ENCODE measurements at regions of chr7 and their contacts with region 1.

Region 1: GRCh38 chr7:99472561-99473243 is at the start of gene ZNF789:
- DNase-seq: peak; percentile 94 to 99 (median 95)
- H3K4me3 ChIP-seq: peak within 1 kb of the TSS; percentile 90 to 93
- H3K4me3 Mint-ChIP-seq: peak within 1 kb of the TSS; percentile 92 to 99 (median 96)
- H3K27ac ChIP-seq: peak within 1 kb of the TSS; percentile 80
- H3K27ac Mint-ChIP-seq: peak within 1 kb of the TSS; percentile 90 to 98 (median 95)
- H3K4me1 ChIP-seq: peaks cover 14% of the 10 kb centered on the region
- H3K4me1 Mint-ChIP-seq: peaks cover 17 to 49% (median 31%) of the 10 kb centered on the region in 4 donors
- H3K27me3 ChIP-seq: no peaks in the 10 kb centered on the region
- H3K27me3 Mint-ChIP-seq: no peaks in the 10 kb centered on the region
- total RNA-seq, gene ZNF789: 20.8 to 21.2 TPM

Region 2: GRCh38 chr7:98641646-98642500 is 830.8 kb before region 1 on chr7:
- CTCF ChIA-PET with region 1: no interaction called
- POLR2A ChIA-PET with region 1: no interaction called
- intact Hi-C with region 1: no loop called
- DNase-seq: no peak
- H3K4me3 ChIP-seq: no peak overlapping the region
- H3K4me3 Mint-ChIP-seq: no peak overlapping the region
- H3K27ac ChIP-seq: no peak overlapping the region
- H3K27ac Mint-ChIP-seq: no peak overlapping the region
- H3K4me1 ChIP-seq: no peaks in the 10 kb centered on the region
- H3K4me1 Mint-ChIP-seq: no peaks in the 10 kb centered on the region
- H3K27me3 ChIP-seq: no peaks in the 10 kb centered on the region
- H3K27me3 Mint-ChIP-seq: peaks cover 0 to 5% of the 10 kb centered on the region in 2 donors

Region 3: GRCh38 chr7:99438573-99439480 is 33.9 kb before region 1 on chr7 and contains the starts of genes CPSF4 and PTCD1:
- CTCF ChIA-PET with region 1: no interaction called
- POLR2A ChIA-PET with region 1: interaction called, 3 read pairs
- intact Hi-C with region 1: loop called (anchors 2 kb)
- DNase-seq: peak; percentile 84 to 87 (median 84)
- H3K4me3 ChIP-seq: peak within 1 kb of the TSS; percentile 77 to 93
- H3K4me3 Mint-ChIP-seq: peak within 1 kb of the TSS; percentile 95 to 98 (median 97)
- H3K27ac ChIP-seq: peak within 1 kb of the TSS; percentile 61
- H3K27ac Mint-ChIP-seq: peak within 1 kb of the TSS; percentile 91 to 96 (median 95)
- H3K4me1 ChIP-seq: peaks cover 17% of the 10 kb centered on the region
- H3K4me1 Mint-ChIP-seq: peaks cover 15 to 40% (median 30%) of the 10 kb centered on the region in 4 donors
- H3K27me3 ChIP-seq: no peaks in the 10 kb centered on the region
- H3K27me3 Mint-ChIP-seq: no peaks in the 10 kb centered on the region
- total RNA-seq, gene CPSF4: 49.2 to 54.7 TPM
- total RNA-seq, gene PTCD1: 7.4 to 7.7 TPM

Region 4: DNA sequence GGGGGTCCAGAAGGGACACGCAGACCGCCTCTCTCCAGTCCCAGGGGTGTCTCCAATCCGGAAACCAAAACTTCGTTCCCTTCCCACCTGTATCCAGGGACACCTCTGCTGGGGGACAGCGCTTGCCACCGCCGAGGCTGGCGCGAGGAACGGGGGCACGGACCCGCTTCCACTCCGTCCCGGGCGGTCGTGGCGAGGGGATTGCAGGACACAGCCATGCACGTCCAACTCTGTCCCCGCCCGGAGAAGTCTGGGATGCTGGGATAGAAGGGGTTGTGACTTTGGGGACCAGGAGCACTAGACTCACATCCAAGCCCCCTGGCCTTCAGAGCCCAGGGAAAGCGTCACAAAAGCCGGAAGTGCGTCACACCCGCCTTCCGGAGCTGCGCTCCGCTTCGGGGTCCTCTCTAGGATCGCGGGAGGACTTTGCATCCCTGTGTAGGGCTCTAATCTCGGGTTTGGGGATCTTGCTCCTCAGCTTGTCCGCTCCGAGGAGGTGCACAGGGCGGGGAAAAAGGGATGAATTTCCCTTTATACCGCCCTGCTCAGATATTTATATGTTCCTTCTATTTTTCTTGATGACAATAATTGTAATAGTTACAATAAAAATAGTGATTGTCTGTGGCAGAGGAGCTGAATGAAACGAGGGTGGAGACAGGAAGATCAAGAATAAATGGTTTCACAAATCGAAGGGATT is 79.2 kb after region 1 on chr7 and contains the start of gene FAM200A:
- CTCF ChIA-PET with region 1: no interaction called
- POLR2A ChIA-PET with region 1: no interaction called
- intact Hi-C with region 1: loop called (anchors 1 kb)
- DNase-seq: peak; percentile 82 to 88 (median 84)
- H3K4me3 ChIP-seq: peak within 1 kb of the TSS; percentile 94 to 95
- H3K4me3 Mint-ChIP-seq: peak within 1 kb of the TSS; percentile 86 to 98 (median 92)
- H3K27ac ChIP-seq: peak within 1 kb of the TSS; percentile 97
- H3K27ac Mint-ChIP-seq: peak within 1 kb of the TSS; percentile 76 to 99 (median 91)
- H3K4me1 ChIP-seq: peaks cover 33% of the 10 kb centered on the region
- H3K4me1 Mint-ChIP-seq: peaks cover 16 to 48% (median 30%) of the 10 kb centered on the region in 4 donors
- H3K27me3 ChIP-seq: no peaks in the 10 kb centered on the region
- H3K27me3 Mint-ChIP-seq: no peaks in the 10 kb centered on the region
- total RNA-seq, gene FAM200A: 12.9 to 13.0 TPM

Region 5: GRCh38 chr7:99616359-99617191 is 143.9 kb after region 1 on chr7 and contains the start of gene ZSCAN25:
- CTCF ChIA-PET with region 1: no interaction called
- POLR2A ChIA-PET with region 1: no interaction called
- intact Hi-C with region 1: loop called (anchors 2 kb)
- DNase-seq: peak; percentile 85 to 86 (median 86)
- H3K4me3 ChIP-seq: peak within 1 kb of the TSS; percentile 79
- H3K4me3 Mint-ChIP-seq: peak within 1 kb of the TSS; percentile 96 to 99 (median 98)
- H3K27ac ChIP-seq: peak within 1 kb of the TSS; percentile 96
- H3K27ac Mint-ChIP-seq: peak within 1 kb of the TSS; percentile 90 to 99 (median 96)
- H3K4me1 ChIP-seq: peaks cover 21% of the 10 kb centered on the region
- H3K4me1 Mint-ChIP-seq: peaks cover 18 to 53% (median 37%) of the 10 kb centered on the region in 4 donors
- H3K27me3 ChIP-seq: no peaks in the 10 kb centered on the region
- H3K27me3 Mint-ChIP-seq: no peaks in the 10 kb centered on the region
- total RNA-seq, gene ZSCAN25: 40.4 to 43.1 TPM

Measured in CD4-positive, alpha-beta memory T cell (primary cell).